ENCODE measurements at regions of chr5 and their contacts with region 1.

Region 1: GRCh38 chr5:103464835-103465484 is 97.6 kb downstream of the NUDT12 start:
- DNase-seq: no peak
- H3K4me3 ChIP-seq: no peak overlapping the region
- H3K27ac ChIP-seq: no peak overlapping the region
- H3K4me1 ChIP-seq: peaks cover 33% of the 10 kb centered on the region
- H3K27me3 ChIP-seq: no peaks in the 10 kb centered on the region
- CTCF ChIP-seq: no peak
- POLR2A ChIP-seq: no peak

Region 2: GRCh38 chr5:103232393-103232999 is 232.5 kb before region 1 on chr5:
- CTCF ChIA-PET with region 1: interaction called, 18 read pairs
- POLR2A ChIA-PET with region 1: no interaction called
- dilution Hi-C with region 1: no loop called
- intact Hi-C with region 1: no loop called
- DNase-seq: peak; percentile 62
- H3K4me3 ChIP-seq: no peak overlapping the region
- H3K27ac ChIP-seq: no peak overlapping the region
- H3K4me1 ChIP-seq: no peaks in the 10 kb centered on the region
- H3K27me3 ChIP-seq: no peaks in the 10 kb centered on the region
- CTCF ChIP-seq: peak; percentile 57 to 68
- POLR2A ChIP-seq: no peak

Region 3: DNA sequence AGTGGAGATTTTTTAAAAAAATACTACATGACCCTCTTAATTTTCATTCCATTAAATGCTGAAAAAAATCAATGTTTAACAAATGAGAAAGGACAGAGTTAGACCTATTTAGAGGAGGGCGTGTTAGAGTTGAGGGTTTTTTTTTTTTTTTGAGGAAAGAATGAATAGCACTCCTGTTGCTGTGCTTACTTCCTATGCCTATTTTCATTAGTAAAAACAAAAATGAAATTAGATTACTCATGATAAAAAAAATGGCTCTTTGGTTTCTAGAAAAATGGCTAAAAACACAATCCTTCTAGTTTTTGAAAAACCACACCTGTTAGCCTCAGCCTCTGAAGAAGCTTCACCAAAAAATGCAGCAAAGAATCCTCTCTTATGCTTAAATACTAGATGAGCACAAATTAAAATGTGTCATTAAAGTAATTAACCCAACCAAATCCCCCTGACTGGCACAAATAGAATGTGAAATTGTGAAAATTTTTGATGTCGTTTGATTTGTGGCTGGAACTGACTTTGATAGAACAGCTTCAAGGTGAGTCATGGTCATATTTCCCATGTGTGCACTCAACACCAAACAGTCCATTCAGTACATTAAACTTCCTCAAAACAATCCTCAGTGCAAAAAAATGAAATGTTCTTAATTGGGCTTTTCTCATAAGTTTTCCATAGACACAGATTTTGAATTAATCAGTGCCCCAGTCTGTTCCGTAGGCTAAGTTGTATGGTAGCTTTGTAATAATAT is 108.4 kb before region 1 on chr5:
- CTCF ChIA-PET with region 1: interaction called, 4 read pairs
- POLR2A ChIA-PET with region 1: no interaction called
- dilution Hi-C with region 1: no loop called
- intact Hi-C with region 1: loop called (anchors 5 kb)
- DNase-seq: no peak
- H3K4me3 ChIP-seq: no peak overlapping the region
- H3K27ac ChIP-seq: no peak overlapping the region
- H3K4me1 ChIP-seq: peaks cover 17% of the 10 kb centered on the region
- H3K27me3 ChIP-seq: no peaks in the 10 kb centered on the region
- CTCF ChIP-seq: no peak
- POLR2A ChIP-seq: no peak

Region 4: DNA sequence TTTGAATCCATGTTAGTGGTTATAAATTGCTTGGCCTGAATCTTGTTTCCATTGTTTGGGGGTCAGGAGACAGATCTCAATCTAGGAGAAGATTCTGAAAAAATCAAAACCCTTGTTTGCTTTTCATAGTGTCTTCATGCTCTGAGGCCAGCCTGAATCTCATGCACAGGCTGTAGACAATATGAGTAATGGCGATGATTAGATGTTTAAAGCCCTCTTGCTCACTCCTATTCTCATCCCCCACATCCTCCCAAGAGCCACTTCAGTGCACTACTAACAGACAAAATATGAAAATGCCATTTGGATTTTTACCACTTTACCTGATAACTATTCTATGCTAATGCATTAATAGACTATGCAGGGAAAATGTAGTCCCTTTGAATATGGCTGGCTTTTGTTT is 31.7 kb before region 1 on chr5:
- CTCF ChIA-PET with region 1: no interaction called
- POLR2A ChIA-PET with region 1: no interaction called
- dilution Hi-C with region 1: no loop called
- intact Hi-C with region 1: no loop called
- DNase-seq: no peak
- H3K4me3 ChIP-seq: no peak overlapping the region
- H3K27ac ChIP-seq: no peak overlapping the region
- H3K4me1 ChIP-seq: no peaks in the 10 kb centered on the region
- H3K27me3 ChIP-seq: no peaks in the 10 kb centered on the region
- CTCF ChIP-seq: no peak
- POLR2A ChIP-seq: no peak

Region 5: DNA sequence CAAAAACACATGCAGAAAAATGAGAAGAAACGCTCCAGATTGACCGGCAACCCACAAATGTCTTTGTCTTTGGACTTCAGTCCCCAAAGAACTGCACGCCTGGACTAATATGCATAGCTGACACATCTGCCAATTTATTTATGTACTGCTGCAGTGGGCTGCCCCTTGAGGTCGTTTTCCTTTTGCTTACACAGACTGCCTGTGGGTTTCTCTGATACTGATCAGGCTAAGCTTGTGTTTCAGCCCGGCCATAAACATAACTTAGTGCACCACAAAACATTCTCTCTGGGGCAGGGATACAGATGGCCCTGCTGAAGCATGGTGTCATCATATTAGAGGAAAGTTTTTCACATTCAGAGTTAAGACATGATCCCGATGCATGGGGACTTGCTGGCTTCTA is 22.3 kb after region 1 on chr5:
- CTCF ChIA-PET with region 1: no interaction called
- POLR2A ChIA-PET with region 1: no interaction called
- dilution Hi-C with region 1: no loop called
- intact Hi-C with region 1: no loop called
- DNase-seq: no peak
- H3K4me3 ChIP-seq: no peak overlapping the region
- H3K27ac ChIP-seq: no peak overlapping the region
- H3K4me1 ChIP-seq: no peaks in the 10 kb centered on the region
- H3K27me3 ChIP-seq: peaks cover 1 to 4% of the 10 kb centered on the region in 2 experiments
- CTCF ChIP-seq: no peak
- POLR2A ChIP-seq: no peak

Region 6: GRCh38 chr5:103657301-103657700 is 192.3 kb after region 1 on chr5:
- CTCF ChIA-PET with region 1: no interaction called
- POLR2A ChIA-PET with region 1: no interaction called
- dilution Hi-C with region 1: no loop called
- intact Hi-C with region 1: no loop called
- DNase-seq: no peak
- H3K4me3 ChIP-seq: no peak overlapping the region
- H3K27ac ChIP-seq: no peak overlapping the region
- H3K4me1 ChIP-seq: no peaks in the 10 kb centered on the region
- H3K27me3 ChIP-seq: no peaks in the 10 kb centered on the region
- CTCF ChIP-seq: no peak
- POLR2A ChIP-seq: no peak

Measured in endothelial cell of umbilical vein (primary cell).